Activated CD4-positive, alpha-beta T cell treated with anti-CD3 and anti-CD28 coated beads for 36 hours (primary cell): ENCODE measurements at regions of chr7 and their contacts with region 1.

Region 1: DNA sequence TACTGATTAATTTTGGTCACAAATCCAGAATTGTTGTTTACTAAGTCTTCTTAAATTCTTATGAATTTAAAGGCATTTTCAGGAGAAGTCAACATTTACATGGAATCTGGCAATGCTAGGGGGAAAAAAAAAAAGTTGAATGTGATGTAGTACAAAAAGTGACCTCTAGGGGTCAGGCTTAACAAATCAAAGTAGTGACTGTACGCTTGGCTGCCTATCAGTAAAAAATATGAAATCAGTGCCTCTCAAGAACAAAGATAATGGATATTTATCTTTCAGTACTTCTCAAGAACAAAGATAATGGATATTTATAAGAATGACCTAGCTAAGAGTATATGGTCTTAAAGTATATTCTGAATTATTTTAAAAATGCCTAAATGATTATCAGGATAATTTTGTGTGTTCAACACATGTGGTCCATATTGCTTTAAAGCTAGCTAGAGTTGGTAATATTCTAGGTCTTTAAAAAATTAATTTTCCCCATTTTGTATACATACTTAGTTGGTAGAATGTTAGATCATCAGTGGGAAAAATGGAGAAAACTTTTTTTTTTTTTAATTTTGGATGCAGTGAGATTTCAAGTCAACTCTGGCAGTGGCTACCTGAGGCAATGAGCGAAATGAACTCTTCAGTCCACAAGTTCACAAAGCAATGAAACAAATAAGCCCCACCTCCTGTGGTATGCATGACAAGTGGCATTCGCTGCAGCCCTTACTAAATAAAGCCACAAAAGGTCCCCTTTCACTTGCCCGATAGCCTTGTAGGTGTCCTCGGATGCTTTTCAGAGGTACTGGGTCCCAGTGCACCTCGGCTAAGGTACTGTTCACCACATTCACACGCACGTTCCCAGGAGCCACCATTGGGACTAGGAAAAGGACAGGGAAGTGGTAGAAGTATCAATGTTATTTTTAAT is 51.2 kb upstream of the LAMB4 start:
- DNase-seq: no peak
- ATAC-seq: no peak
- H3K4me3 Mint-ChIP-seq: no peak overlapping the region
- H3K27ac Mint-ChIP-seq: no peak overlapping the region
- H3K4me1 Mint-ChIP-seq: no peaks in the 10 kb centered on the region
- H3K27me3 Mint-ChIP-seq: peaks cover 2% of the 10 kb centered on the region

Region 2: GRCh38 chr7:107201795-107202450 is 979.4 kb before region 1 on chr7:
- CTCF ChIA-PET with region 1: no interaction called
- POLR2A ChIA-PET with region 1: no interaction called
- intact Hi-C with region 1: no loop called
- DNase-seq: peak; percentile 61
- ATAC-seq: peak; percentile 78
- H3K4me3 Mint-ChIP-seq: no peak overlapping the region
- H3K27ac Mint-ChIP-seq: no peak overlapping the region
- H3K4me1 Mint-ChIP-seq: no peaks in the 10 kb centered on the region
- H3K27me3 Mint-ChIP-seq: no peaks in the 10 kb centered on the region

Region 3: DNA sequence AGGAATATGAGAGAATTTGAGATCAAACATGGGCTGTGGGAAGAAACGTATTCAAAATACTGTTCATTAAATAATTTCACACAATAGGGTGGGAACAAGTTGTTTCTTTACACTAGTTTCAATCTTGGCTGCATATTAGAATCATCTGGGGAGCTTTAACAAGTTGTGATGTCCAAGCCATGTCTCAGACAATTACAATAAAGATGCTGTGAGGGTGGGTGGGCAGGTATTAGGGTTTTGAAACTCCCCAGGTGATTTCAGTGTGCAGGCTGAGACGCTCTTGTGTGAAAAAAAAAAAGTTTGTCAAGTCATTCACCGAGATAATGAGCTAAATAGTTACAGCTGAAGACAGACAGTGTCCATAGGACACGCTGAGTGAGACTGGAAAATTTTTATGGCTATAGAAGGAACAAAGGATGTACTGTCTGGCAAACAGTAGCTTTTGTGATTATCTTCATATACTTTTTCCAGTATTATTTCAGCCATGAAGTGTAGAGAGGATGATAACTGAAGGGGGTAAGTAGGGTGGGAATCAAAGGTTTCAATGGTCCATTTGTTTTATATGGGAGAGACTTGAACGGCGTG is 38.6 kb before region 1 on chr7:
- CTCF ChIA-PET with region 1: no interaction called
- POLR2A ChIA-PET with region 1: no interaction called
- intact Hi-C with region 1: no loop called
- DNase-seq: no peak
- ATAC-seq: no peak
- H3K4me3 Mint-ChIP-seq: no peak overlapping the region
- H3K27ac Mint-ChIP-seq: no peak overlapping the region
- H3K4me1 Mint-ChIP-seq: no peaks in the 10 kb centered on the region
- H3K27me3 Mint-ChIP-seq: peaks cover 6% of the 10 kb centered on the region

Region 4: GRCh38 chr7:108459931-108460551 is 278.7 kb after region 1 on chr7:
- CTCF ChIA-PET with region 1: interaction called, 5 read pairs
- POLR2A ChIA-PET with region 1: no interaction called
- intact Hi-C with region 1: loop called (anchors 1 kb)
- DNase-seq: peak; percentile 57
- ATAC-seq: peak; percentile 63
- H3K4me3 Mint-ChIP-seq: no peak overlapping the region
- H3K27ac Mint-ChIP-seq: no peak overlapping the region
- H3K4me1 Mint-ChIP-seq: peaks cover 40% of the 10 kb centered on the region
- H3K27me3 Mint-ChIP-seq: peaks cover 28% of the 10 kb centered on the region

Region 5: GRCh38 chr7:108596560-108596959 is 415.2 kb after region 1 on chr7:
- CTCF ChIA-PET with region 1: interaction called, 9 read pairs
- POLR2A ChIA-PET with region 1: no interaction called
- intact Hi-C with region 1: loop called in 1 of 2 experiments (anchors 1 kb)
- DNase-seq: peak; percentile 71
- ATAC-seq: peak; percentile 69
- H3K4me3 Mint-ChIP-seq: no peak overlapping the region
- H3K27ac Mint-ChIP-seq: no peak overlapping the region
- H3K4me1 Mint-ChIP-seq: no peaks in the 10 kb centered on the region
- H3K27me3 Mint-ChIP-seq: peaks cover 7% of the 10 kb centered on the region

Region 6: DNA sequence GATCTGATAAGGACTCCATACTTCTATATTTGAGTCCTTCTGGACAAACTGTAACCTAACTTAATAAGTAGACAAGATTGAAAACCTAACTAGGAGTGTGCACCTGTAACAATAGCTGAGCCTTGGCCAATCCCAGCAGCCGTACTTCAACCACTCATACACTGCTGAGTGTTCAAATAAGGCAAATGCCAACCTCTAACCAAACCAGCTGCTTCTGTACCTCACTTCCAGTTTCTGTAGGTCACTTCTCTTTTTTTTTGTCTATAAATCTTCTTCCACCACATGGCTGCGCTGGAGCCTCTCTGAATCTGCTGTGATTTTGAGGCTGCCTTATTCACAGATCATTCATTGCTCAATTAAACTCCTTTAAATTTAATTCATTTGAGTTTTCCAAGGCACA is 1141.5 kb after region 1 on chr7:
- CTCF ChIA-PET with region 1: no interaction called
- POLR2A ChIA-PET with region 1: no interaction called
- intact Hi-C with region 1: no loop called
- DNase-seq: no peak
- ATAC-seq: no peak
- H3K4me3 Mint-ChIP-seq: no peak overlapping the region
- H3K27ac Mint-ChIP-seq: no peak overlapping the region
- H3K4me1 Mint-ChIP-seq: no peaks in the 10 kb centered on the region
- H3K27me3 Mint-ChIP-seq: no peaks in the 10 kb centered on the region